Dorsolateral prefrontal cortex (tissue), 120 donors: ENCODE measurements at regions of chr3 and their contacts with region 1.

Region 1: GRCh38 chr3:183099026-183099837 is at the start of gene MCCC1:
- DNase-seq: peak; percentile 97 to 100 (median 99)
- H3K4me3 ChIP-seq: peak within 1 kb of the TSS; percentile 68 to 99 (median 93)
- H3K27ac ChIP-seq: peak within 1 kb of the TSS; percentile 62 to 97 (median 92)
- H3K27me3 ChIP-seq: no peaks in the 10 kb centered on the region
- CTCF ChIP-seq: peak in 38 of 56 donors; percentile 2 to 47 (median 23)
- total RNA-seq, gene MCCC1: 33.9 to 85.1 (median 50.9) TPM

Region 2: GRCh38 chr3:182792901-182793662 is 306.1 kb before region 1 on chr3 and contains the start of gene ATP11B:
- intact Hi-C with region 1: loop called (anchors 2 to 10 kb)
- DNase-seq: peak; percentile 48 to 84 (median 70)
- H3K4me3 ChIP-seq: peak within 1 kb of the TSS; percentile 68 to 98 (median 86)
- H3K27ac ChIP-seq: peak within 1 kb of the TSS; percentile 67 to 99 (median 91)
- H3K27me3 ChIP-seq: no peaks in the 10 kb centered on the region
- CTCF ChIP-seq: peak in 7 of 56 donors; percentile 4 to 31 (median 20)
- total RNA-seq, gene ATP11B: 29.5 to 78.3 (median 50.7) TPM

Region 3: DNA sequence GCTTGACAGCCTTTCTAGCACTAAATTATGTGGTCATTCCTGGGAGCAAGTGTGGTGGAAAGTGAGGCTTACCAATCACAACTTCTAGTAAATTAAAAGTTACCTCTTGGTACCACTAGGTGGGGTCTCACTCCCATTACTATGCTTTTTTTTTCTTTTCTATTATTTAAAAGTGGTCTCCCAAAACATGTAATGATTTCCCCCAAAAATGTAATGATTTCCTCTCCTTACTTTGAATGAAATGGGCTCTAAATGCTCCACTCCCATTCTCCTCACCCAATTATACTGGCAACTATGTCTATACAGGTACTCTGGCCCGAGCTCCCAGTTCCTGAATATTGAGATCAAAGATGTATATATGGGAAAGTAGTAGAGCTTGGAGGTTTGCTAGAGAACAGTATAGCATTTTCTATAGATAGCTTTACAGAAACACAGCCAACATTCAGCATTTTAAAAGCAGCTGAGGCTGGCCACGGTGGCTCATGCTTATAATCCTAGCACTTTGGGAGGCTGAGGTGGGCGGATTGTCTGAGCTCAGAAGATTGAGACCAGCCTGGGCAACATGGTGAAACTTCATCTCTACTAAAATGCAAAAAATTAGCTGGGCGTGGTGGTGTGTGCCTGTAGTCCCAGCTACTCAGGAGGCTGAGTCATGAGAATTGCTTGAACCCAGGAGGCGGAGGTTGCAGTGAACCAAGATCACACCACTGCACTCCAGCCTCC is 189.8 kb before region 1 on chr3:
- intact Hi-C with region 1: loop called (anchors 10 kb)
- DNase-seq: peak in 2 of 10 donors; percentile 32 to 47
- H3K4me3 ChIP-seq: no peak overlapping the region
- H3K27ac ChIP-seq: peak overlapping the region in 15 of 59 donors; percentile 4 to 49 (median 28)
- H3K27me3 ChIP-seq: no peaks in the 10 kb centered on the region
- CTCF ChIP-seq: peak in 55 of 56 donors; percentile 26 to 71 (median 56)

Region 4: GRCh38 chr3:182980204-182981037 is 118.8 kb before region 1 on chr3 and contains the start of gene DCUN1D1:
- intact Hi-C with region 1: loop called (anchors 5 to 10 kb)
- DNase-seq: peak; percentile 75 to 93 (median 86)
- H3K4me3 ChIP-seq: peak within 1 kb of the TSS; percentile 65 to 97 (median 91)
- H3K27ac ChIP-seq: peak within 1 kb of the TSS; percentile 75 to 97 (median 92)
- H3K27me3 ChIP-seq: no peaks in the 10 kb centered on the region
- CTCF ChIP-seq: peak in 5 of 56 donors; percentile 3 to 23 (median 7)
- total RNA-seq, gene DCUN1D1: 49.4 to 86.8 (median 66.2) TPM

Region 5: DNA sequence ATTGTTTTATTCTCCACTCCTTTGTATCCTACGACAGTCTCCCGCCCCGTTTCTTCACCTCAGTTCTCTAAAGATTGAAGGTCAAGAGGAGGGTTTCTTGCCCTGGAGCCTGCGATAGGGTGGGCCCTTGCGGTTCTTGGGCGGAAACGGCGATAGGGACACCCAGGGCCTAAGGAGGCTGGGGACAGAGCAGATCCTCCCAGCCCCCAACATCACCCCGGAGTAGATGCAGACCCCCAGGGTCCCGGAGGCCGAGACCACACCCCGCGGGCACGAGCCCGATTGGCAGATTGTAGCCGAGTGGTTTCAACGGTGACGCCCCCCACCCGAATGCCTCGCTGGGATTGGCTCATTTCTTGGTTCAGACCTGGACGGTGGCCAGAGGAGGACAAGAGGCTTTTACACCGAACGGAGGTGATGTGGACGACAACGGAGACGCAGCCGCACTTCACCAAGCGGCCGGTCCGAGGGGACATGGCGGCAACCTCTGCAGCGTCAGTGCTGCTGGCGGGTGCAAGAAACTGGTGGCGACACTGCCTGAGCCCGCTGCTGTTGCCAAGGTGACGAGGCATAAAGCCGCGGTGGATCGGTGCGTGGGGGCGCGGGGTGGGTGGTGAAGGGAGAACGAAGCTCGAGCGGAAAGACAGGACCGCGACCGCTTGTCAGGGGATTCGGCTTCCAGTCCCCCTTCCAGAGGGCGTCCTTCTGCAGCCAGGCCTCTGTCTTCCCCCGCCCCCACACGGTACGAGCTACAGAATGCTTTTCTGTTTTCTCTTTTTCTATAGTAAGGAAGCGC is 348.2 kb after region 1 on chr3:
- intact Hi-C with region 1: loop called in 1 of 2 experiments (anchors 5 kb)
- DNase-seq: peak; percentile 69 to 93 (median 88)
- H3K4me3 ChIP-seq: peak overlapping the region; percentile 48 to 93 (median 80)
- H3K27ac ChIP-seq: peak overlapping the region; percentile 57 to 97 (median 90)
- H3K27me3 ChIP-seq: no peaks in the 10 kb centered on the region
- CTCF ChIP-seq: peak in 35 of 56 donors; percentile 7 to 56 (median 30)